Left ventricle myocardium superior (tissue), 1 donor: ENCODE measurements at regions of chr7 and their contacts with region 1.

Region 1: DNA sequence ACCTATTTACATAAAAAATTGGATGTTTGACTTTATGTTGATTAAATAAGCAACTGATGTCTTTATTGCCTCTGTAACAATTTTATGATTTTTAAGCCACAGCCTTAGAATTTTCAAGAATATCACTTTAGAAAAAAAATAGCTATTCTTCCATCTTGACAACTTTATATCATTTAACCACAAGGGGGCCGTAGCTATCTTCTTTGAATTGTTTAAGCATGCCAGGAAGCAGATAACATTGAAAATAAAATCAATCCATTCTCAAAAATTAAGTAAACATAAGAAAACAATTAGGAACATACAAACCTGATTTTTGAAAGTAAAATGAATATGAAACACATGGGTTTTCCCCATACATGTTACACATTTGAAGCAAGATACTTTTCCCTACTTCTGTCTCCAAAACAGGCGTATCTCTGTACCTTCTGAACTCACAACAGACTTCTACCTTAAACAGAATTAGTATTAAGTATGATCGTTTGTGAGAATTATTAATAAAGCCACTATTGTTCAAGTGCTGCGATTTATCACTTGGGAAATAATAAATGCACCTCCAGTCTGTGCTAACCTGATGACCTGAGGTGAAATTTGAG is 209.0 kb downstream of the CACNA2D1 start:
- DNase-seq: no peak
- ATAC-seq: peak; percentile 33

Region 2: DNA sequence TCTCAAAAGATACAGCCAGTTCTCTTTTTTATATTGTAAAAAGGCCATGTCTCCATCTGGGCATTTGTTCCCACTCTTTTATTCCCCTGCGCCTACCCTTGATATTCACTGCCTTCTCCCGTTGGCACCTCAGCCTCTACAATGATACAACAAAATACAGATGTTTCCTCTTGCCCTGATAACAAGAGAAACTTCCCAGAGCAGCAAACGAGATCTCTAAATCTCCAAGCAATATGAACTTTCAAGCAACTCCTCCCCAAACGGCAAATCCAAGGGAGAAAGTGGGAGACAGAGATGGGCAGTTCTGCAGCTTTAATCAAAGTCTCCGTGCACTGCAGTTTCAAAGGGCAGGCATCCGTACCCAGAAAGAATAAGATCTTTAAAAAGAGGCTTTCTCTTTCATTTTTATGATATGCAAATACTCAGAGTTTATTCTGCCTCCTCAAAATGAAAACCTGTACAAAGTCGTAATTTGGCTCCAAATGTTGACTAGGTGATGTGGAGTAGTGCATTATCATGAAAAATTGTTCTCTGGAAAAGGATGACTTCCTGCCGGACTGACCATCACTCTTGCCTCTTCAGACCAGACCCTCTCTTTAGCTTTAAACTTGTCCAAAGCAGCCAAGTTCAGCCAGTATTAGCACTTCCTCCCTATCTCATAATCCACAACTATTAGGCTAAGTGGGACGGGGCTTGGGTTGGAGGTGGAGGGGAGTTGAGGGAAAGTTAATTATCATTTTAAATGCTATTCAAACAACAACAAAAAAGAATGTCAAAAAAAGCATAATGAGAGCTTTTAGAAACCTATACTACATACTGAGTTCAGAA is 465.4 kb before region 1 on chr7:
- intact Hi-C with region 1: no loop called
- DNase-seq: no peak
- ATAC-seq: peak; percentile 53

Region 3: GRCh38 chr7:82443547-82444219 is 209.1 kb after region 1 on chr7 and contains the start of gene CACNA2D1:
- intact Hi-C with region 1: loop called (anchors 10 kb)
- DNase-seq: peak; percentile 91
- ATAC-seq: peak; percentile 95
- total RNA-seq, gene CACNA2D1: 48.1 TPM

Region 4: GRCh38 chr7:82477733-82478515 is 243.4 kb after region 1 on chr7:
- intact Hi-C with region 1: loop called (anchors 10 kb)
- DNase-seq: no peak
- ATAC-seq: no peak

Region 5: GRCh38 chr7:82572195-82572880 is 337.8 kb after region 1 on chr7:
- intact Hi-C with region 1: loop called (anchors 10 kb)
- DNase-seq: peak; percentile 82
- ATAC-seq: peak; percentile 89